Activated CD8-positive, alpha-beta T cell treated with anti-CD3 and anti-CD28 coated beads for 36 hours (primary cell): ENCODE measurements at regions of chr1 and their contacts with region 1.

Region 1: DNA sequence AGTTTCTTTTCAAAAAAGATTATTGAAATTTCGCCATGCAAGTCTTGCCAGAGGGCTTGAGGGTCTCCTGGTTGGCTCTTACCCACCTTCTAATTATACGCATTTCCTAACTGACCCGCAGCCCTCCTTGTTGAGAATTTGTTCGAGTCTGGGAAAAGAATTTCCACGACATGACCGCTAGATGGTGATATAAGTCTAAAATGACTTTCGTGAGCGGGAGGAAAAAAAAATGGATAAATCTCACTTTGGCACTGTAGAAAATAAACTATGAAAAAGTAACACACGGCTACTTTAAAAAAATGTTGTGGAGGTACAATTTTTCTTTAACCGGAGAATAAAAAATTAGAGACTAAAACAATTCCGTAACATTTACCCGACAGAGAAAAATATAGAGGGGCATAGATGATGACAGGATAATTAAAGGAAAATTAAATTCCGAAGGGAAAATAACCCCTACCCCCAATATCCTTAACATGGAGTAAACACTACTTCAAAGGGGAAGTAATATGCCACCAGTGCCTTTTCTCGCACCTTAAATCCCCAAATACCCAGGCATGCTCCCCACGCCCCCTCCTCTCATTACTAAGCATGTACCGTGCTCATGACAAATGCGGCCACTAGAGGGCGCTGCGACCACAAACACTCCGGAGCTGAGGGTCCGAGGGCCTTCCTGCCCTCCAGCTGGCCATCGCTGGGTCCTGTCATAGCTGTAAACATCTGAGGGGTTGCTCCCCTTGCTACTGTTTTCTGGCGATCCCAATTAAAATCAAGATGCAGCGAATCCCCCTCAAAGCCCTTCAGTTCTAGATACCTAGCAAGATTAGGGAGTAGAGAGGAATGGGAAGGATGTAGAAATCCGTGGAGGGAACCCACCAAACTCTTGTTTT is 266.9 kb downstream of the ASTN1 start:
- DNase-seq: peak; percentile 67
- ATAC-seq: peak; percentile 55
- H3K4me3 Mint-ChIP-seq: no peak overlapping the region
- H3K27ac Mint-ChIP-seq: no peak overlapping the region
- H3K4me1 Mint-ChIP-seq: peaks cover 3% of the 10 kb centered on the region
- H3K27me3 Mint-ChIP-seq: peaks cover 5% of the 10 kb centered on the region
- CTCF ChIP-seq: peak; percentile 74

Region 2: DNA sequence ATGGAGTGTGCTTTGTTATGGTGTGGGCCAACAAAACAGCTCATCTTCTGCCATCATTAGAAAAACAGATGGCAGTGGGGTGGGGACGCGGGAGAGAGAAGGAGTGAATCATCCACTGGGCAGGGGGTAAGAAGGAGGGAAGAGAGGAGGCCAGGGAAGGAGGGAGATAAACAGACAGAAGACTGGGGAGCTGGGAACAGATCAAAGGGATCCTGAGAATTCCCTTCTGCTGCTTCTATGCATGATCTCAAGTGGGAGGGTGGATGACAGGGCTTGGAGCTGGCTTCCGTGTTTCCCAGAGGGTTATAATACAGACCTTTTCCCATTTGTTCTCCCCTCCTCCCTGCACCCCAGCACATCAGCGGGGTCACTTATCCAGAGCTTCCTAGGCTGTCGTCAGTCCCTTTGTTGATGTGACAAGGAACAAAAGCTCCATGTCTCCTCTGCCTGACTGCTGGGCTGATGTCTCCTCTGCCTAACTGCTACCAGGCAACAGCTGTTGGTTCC is 96.0 kb before region 1 on chr1:
- CTCF ChIA-PET with region 1: no interaction called
- POLR2A ChIA-PET with region 1: no interaction called
- intact Hi-C with region 1: no loop called
- DNase-seq: no peak
- ATAC-seq: no peak
- H3K4me3 Mint-ChIP-seq: no peak overlapping the region
- H3K27ac Mint-ChIP-seq: no peak overlapping the region
- H3K4me1 Mint-ChIP-seq: no peaks in the 10 kb centered on the region
- H3K27me3 Mint-ChIP-seq: no peaks in the 10 kb centered on the region
- CTCF ChIP-seq: no peak

Region 3: GRCh38 chr1:176880954-176881595 is 16.5 kb before region 1 on chr1:
- CTCF ChIA-PET with region 1: no interaction called
- POLR2A ChIA-PET with region 1: no interaction called
- intact Hi-C with region 1: no loop called
- DNase-seq: peak; percentile 66
- ATAC-seq: no peak
- H3K4me3 Mint-ChIP-seq: no peak overlapping the region
- H3K27ac Mint-ChIP-seq: no peak overlapping the region
- H3K4me1 Mint-ChIP-seq: no peaks in the 10 kb centered on the region
- H3K27me3 Mint-ChIP-seq: peaks cover 3% of the 10 kb centered on the region
- CTCF ChIP-seq: peak; percentile 72

Region 4: DNA sequence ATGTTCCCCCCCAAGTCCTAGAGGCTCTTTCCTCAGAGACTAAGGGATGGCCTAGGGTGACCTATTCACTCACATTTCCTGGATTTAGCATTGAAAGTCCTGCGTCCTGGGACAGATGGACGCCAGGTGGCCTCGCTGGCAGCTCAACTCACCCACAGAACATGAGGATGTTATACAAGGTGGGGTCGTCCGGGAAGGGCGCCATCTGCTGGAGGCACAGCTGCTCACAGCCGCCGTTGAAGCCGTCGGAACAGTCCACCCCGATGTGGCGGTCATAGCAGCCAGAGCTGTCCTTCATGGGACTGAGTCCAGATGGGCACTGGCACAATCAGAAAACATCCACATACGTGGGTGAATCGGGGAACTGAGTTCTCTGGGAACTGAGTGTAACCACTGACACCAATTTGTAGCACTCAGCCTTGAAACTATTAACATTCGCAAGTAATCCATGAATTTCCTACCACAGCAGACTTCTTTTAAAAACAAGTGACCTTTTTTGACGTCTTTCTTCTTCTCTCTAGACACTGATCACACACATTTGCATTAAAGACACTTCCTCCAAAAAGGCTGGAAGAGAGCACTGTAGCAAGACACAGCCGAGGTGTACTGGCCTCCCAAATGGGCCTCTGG is 51.6 kb after region 1 on chr1:
- CTCF ChIA-PET with region 1: interaction called, 10 read pairs
- POLR2A ChIA-PET with region 1: no interaction called
- intact Hi-C with region 1: no loop called
- DNase-seq: peak; percentile 46
- ATAC-seq: no peak
- H3K4me3 Mint-ChIP-seq: no peak overlapping the region
- H3K27ac Mint-ChIP-seq: no peak overlapping the region
- H3K4me1 Mint-ChIP-seq: no peaks in the 10 kb centered on the region
- H3K27me3 Mint-ChIP-seq: peaks cover 7% of the 10 kb centered on the region
- CTCF ChIP-seq: peak; percentile 59

Region 5: GRCh38 chr1:177181631-177182291 is 284.2 kb after region 1 on chr1:
- CTCF ChIA-PET with region 1: interaction called, 6 read pairs
- POLR2A ChIA-PET with region 1: no interaction called
- intact Hi-C with region 1: loop called (anchors 5 kb)
- DNase-seq: peak; percentile 58
- ATAC-seq: peak; percentile 77
- H3K4me3 Mint-ChIP-seq: peak overlapping the region; percentile 19
- H3K27ac Mint-ChIP-seq: no peak overlapping the region
- H3K4me1 Mint-ChIP-seq: peaks cover 7% of the 10 kb centered on the region
- H3K27me3 Mint-ChIP-seq: peaks cover 23% of the 10 kb centered on the region
- CTCF ChIP-seq: peak; percentile 73

Region 6: DNA sequence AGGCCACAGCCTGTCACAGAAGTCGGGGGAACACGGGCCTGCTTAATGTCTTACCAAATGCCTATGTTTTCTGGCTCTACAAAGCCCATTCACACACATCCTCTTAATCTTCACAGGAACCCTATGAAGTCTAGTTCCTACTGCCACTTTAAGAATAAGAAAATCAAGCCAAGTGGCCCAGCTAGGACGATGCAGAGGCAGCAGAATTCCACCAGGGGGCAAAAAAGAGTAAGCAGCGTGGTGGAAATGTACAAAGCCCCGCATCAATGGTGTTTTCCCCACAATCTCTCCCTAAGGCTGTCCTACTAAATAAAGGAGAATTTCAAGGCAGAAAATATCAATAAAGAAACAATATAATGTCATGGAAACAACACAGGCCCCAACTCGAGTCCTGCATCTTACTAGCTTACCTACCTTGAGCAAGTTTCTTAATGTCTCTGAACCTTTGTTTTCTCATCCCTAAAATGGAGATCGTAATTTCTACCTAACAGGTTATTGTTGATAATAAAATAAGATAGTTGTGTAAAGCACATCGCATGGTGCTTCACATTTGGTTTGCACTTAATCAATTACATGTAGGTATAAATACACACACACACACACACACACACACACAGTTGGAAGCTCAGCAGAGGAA is 1050.9 kb after region 1 on chr1:
- CTCF ChIA-PET with region 1: no interaction called
- POLR2A ChIA-PET with region 1: no interaction called
- intact Hi-C with region 1: loop called (anchors 10 kb)
- DNase-seq: peak; percentile 23
- ATAC-seq: peak; percentile 65
- H3K4me3 Mint-ChIP-seq: no peak overlapping the region
- H3K27ac Mint-ChIP-seq: no peak overlapping the region
- H3K4me1 Mint-ChIP-seq: no peaks in the 10 kb centered on the region
- H3K27me3 Mint-ChIP-seq: peaks cover 1% of the 10 kb centered on the region
- CTCF ChIP-seq: peak; percentile 67